ENCODE measurements at regions of chr6 and their contacts with region 1.

Region 1: GRCh38 chr6:166167801-166168615 is at the start of gene TBXT:
- DNase-seq: no peak
- H3K4me3 Mint-ChIP-seq: peak within 1 kb of the TSS; percentile 64
- H3K27ac Mint-ChIP-seq: peak within 1 kb of the TSS; percentile 34
- H3K4me1 Mint-ChIP-seq: peaks cover 5% of the 10 kb centered on the region
- H3K27me3 Mint-ChIP-seq: peaks cover 57% of the 10 kb centered on the region
- total RNA-seq, gene TBXT: not detected in 2 replicates

Region 2: DNA sequence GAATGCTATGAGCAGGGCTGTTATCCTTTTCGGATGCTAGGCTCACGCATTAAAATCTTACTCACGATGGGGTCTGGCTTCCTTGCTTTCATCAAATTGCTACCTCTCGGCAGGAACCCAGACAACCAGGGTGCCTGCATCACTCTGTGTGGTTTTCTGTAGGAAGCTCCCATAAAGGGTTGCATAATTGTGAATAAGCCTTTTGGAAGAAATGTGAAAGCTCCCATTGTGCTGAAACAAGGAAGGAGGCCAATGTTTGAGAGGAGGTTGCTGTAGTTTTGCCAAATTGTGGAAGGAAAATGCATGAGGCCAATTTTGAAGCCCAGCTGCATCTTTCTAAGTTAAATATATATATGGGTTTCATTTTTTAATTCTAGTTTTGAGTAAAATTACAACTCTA is 1474.1 kb before region 1 on chr6:
- intact Hi-C with region 1: no loop called
- DNase-seq: no peak
- H3K4me3 Mint-ChIP-seq: no peak overlapping the region
- H3K27ac Mint-ChIP-seq: no peak overlapping the region
- H3K4me1 Mint-ChIP-seq: no peaks in the 10 kb centered on the region
- H3K27me3 Mint-ChIP-seq: no peaks in the 10 kb centered on the region

Region 3: GRCh38 chr6:165676435-165677068 is 491.5 kb before region 1 on chr6:
- intact Hi-C with region 1: loop called (anchors 10 kb)
- DNase-seq: no peak
- H3K4me3 Mint-ChIP-seq: no peak overlapping the region
- H3K27ac Mint-ChIP-seq: no peak overlapping the region
- H3K4me1 Mint-ChIP-seq: no peaks in the 10 kb centered on the region
- H3K27me3 Mint-ChIP-seq: peaks cover 2% of the 10 kb centered on the region

Region 4: DNA sequence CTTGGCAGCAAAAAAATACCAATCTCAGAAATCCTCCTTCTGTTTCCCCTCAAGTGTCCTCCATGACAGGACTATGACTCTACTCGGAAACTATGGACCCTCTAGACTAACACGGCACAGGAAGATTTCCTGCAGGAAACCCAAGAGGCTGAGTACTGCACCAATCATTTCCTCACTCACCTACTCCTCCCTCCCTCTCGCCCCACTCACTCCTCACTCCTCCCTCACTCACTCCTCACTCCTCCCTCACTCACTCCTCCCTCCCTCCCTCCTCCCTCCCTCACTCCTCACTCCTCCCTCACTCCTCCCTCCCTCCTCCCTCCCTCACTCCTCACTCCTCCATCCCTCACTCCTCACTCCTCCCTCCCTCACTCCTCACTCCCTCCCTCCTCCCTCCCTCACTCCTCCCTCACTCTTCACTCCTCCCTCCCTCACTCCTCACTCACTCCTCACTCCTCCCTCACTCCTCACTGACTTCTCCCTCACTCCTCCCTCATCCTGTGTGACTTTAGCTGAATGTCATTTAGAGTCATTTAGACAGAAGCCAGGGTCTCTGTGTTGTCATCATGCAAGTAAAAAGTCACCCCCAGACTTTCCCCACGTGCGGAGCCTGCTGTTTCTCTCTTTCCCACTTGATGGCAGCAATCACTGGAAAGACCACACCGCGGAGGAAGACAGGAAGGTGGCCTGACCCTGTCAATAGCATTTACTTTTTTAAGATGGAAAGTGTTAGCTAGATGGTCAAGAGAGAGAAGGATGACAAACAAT is 278.2 kb before region 1 on chr6:
- intact Hi-C with region 1: no loop called
- DNase-seq: no peak
- H3K4me3 Mint-ChIP-seq: no peak overlapping the region
- H3K27ac Mint-ChIP-seq: no peak overlapping the region
- H3K4me1 Mint-ChIP-seq: peaks cover 3% of the 10 kb centered on the region
- H3K27me3 Mint-ChIP-seq: peaks cover 2% of the 10 kb centered on the region

Region 5: DNA sequence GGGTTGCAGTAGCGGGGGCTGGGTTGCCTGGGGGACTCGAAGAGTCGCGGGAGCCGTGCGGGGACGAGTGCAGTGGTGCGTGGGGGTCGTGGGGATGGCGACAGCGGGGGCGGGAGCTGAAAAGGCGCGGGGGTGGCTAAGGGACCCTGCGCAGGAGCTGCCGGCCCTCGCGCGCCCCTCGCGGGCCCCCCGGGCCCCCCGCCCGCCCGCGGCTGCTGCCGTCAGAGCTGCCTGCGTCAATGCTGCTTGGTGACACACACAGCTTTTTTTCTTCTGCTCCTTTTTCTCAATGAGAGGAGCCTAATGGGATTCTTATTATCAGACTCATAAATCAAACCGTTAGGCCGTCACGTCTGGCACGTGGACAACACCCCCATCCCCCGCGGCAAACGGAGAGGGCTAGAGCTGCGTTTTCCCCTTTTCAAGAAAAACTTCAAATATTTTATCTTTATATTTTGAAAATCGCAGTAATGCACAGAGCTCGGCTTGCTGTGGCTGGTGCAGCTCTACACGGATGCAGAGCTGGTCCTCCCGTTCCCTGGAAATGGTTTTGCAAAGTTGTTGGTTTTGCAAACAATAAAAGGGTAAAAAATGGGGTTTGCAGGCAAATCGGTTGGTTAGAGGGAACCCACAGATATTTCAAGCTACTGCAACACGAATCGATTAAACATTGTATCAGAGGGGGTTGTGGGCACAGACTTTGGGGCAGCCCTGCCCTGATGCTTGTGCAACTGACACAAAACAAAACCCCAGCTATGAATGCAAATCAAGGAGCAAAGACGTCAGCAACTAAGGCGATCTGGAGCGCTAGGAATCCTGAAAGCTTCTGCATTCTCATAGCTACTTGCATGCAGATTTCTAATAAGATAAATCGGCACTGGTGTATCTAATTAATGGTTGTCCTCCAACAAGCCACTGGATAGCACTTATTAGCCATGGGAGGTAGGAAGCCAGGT is 161.8 kb before region 1 on chr6:
- intact Hi-C with region 1: loop called (anchors 5 kb)
- DNase-seq: no peak
- H3K4me3 Mint-ChIP-seq: no peak overlapping the region
- H3K27ac Mint-ChIP-seq: no peak overlapping the region
- H3K4me1 Mint-ChIP-seq: no peaks in the 10 kb centered on the region
- H3K27me3 Mint-ChIP-seq: peaks cover 52% of the 10 kb centered on the region

Region 6: DNA sequence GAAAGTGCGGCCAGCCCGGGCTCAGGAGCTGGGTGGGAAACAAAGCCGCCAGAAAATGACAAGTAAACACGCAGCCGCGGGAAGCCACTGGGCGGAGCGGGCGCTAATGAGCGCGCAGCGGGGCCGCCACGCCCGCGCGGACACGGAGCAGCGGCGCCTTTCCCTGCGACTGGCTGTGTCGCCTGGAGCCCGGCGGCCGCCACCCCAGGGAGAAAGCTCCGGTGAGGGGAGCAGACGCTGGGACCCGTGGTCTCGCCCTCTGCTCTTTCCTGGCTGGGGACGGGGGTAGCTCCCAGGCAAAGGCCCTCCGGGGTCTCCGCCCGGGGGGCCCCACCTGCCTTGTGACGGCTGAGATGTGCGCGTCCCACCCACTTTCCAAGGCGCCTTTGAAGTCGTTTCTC is 85.3 kb after region 1 on chr6:
- intact Hi-C with region 1: loop called (anchors 2 kb)
- DNase-seq: no peak
- H3K4me3 Mint-ChIP-seq: peak overlapping the region; percentile 64
- H3K27ac Mint-ChIP-seq: no peak overlapping the region
- H3K4me1 Mint-ChIP-seq: peaks cover 6% of the 10 kb centered on the region
- H3K27me3 Mint-ChIP-seq: peaks cover 65% of the 10 kb centered on the region